Colonic mucosa (tissue), 4 donors: ENCODE measurements at regions of chr6 and their contacts with region 1.

Region 1: DNA sequence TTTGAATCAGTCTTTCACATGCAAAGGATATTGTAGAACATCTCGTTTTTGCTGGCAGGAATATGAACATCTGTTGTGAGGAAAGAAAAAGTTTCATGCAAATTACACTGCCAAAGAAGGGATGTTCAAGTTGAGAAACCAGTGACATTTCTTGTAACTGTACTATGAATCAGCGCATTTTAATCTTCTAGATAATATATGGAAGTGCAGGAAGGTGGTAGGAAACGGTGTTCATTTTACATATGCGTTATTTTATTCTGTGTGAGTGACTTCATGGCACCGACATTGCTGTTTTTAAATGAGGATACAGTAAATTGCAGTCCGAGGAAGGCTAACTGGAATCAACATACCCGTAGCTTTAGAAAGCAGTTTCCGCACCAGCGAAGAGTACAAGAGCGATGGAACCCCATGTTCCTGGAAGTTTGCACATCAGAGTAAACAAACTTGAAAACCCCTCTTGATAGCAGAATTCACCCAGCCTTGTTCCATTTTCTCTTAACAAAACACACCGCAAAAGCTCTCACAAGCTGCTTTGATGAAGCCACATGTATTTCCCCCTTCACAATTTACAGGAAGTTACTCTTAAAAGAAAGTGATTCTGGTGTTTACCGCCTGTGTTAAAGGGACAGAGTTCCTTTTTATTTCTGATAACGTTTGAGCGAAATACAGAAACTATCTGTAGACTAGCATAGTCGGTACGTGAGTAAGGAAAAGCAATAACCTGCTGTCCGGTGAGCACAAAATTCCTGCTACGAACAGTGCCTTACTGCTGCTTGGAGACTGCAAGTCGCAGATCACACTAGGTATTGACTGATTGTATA is 11.5 kb downstream of the PRDM1 start:
- DNase-seq: peak; percentile 51
- H3K4me3 ChIP-seq: peak overlapping the region; percentile 41
- H3K27ac ChIP-seq: peak overlapping the region; percentile 79
- H3K4me1 ChIP-seq: no peaks in the 10 kb centered on the region
- H3K27me3 ChIP-seq: no peaks in the 10 kb centered on the region
- CTCF ChIP-seq: no peak

Region 2: DNA sequence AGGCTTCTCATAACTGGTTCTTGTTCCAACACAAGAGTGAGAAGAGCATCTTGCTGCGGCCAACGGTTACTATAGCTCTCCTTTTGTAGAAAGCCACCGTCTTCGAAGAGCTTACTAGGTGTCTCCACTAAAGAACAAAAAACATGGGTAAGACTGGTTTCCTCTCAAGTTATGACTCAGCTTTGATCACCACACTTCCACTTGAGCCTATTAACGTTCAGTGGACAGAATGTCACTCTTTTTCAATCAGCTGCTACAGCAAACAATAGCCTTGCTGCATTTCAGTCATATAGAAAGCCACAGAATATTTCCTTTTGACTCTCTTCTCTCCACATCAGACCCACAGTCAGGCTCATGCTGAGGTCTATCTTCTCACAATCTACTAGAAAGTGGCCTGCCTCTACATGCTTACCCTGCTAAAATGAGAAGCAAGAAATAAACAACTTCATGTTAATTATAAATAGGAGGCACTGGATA is 451.2 kb before region 1 on chr6:
- intact Hi-C with region 1: no loop called
- DNase-seq: no peak
- H3K4me3 ChIP-seq: no peak overlapping the region
- H3K27ac ChIP-seq: no peak overlapping the region
- H3K4me1 ChIP-seq: no peaks in the 10 kb centered on the region
- H3K27me3 ChIP-seq: no peaks in the 10 kb centered on the region
- CTCF ChIP-seq: no peak

Region 3: DNA sequence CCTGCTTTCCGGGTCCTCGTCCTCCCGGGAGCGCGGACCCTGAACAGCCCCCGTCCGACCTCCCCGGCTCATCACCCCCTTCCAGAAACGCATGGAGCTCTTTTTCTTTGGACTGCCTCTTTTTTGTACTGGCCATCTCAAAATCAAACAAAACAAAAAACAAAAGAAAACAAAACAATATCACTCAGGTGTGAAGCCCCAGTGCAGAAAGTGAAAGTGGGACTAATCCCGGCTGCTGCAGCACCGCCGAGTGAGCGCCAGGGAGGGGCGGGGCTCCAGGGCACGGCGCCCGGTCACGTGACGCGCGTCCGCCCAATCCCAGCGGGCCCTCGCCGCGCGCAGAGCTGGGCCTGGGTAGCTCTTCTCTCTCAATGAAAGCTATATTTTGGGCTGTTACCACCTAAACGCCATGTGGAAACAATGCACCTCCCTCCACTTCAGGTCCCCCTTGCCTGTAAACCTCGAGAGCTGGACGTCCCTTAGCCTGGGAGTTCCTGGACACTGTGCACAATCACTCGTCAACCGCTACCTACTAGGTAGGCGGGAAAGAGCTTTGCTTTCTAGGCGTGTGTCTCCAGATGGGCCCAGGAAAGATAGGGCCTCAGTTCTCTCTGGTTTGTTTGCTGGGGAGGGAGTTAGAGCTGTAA is 105.2 kb before region 1 on chr6:
- intact Hi-C with region 1: loop called (anchors 10 kb)
- DNase-seq: peak; percentile 87
- H3K4me3 ChIP-seq: peak overlapping the region; percentile 63
- H3K27ac ChIP-seq: peak overlapping the region; percentile 48
- H3K4me1 ChIP-seq: no peaks in the 10 kb centered on the region
- H3K27me3 ChIP-seq: peaks cover 33% of the 10 kb centered on the region
- CTCF ChIP-seq: no peak

Region 4: GRCh38 chr6:106145741-106146227 is 48.2 kb after region 1 on chr6:
- intact Hi-C with region 1: no loop called
- DNase-seq: no peak
- H3K4me3 ChIP-seq: no peak overlapping the region
- H3K27ac ChIP-seq: no peak overlapping the region
- H3K4me1 ChIP-seq: no peaks in the 10 kb centered on the region
- H3K27me3 ChIP-seq: no peaks in the 10 kb centered on the region
- CTCF ChIP-seq: no peak

Region 5: GRCh38 chr6:106194949-106195921 is 97.6 kb after region 1 on chr6:
- intact Hi-C with region 1: loop called (anchors 10 kb)
- DNase-seq: no peak
- H3K4me3 ChIP-seq: no peak overlapping the region
- H3K27ac ChIP-seq: peak overlapping the region; percentile 4
- H3K4me1 ChIP-seq: no peaks in the 10 kb centered on the region
- H3K27me3 ChIP-seq: no peaks in the 10 kb centered on the region
- CTCF ChIP-seq: no peak

Region 6: GRCh38 chr6:106223300-106223930 is 125.8 kb after region 1 on chr6:
- intact Hi-C with region 1: loop called (anchors 10 kb)
- DNase-seq: peak; percentile 79
- H3K4me3 ChIP-seq: no peak overlapping the region
- H3K27ac ChIP-seq: no peak overlapping the region
- H3K4me1 ChIP-seq: no peaks in the 10 kb centered on the region
- H3K27me3 ChIP-seq: no peaks in the 10 kb centered on the region
- CTCF ChIP-seq: peak; percentile 56

Region 7: GRCh38 chr6:106300944-106301343 is 203.3 kb after region 1 on chr6:
- intact Hi-C with region 1: loop called (anchors 10 kb)
- DNase-seq: no peak
- H3K4me3 ChIP-seq: no peak overlapping the region
- H3K27ac ChIP-seq: no peak overlapping the region
- H3K4me1 ChIP-seq: peaks cover 5% of the 10 kb centered on the region
- H3K27me3 ChIP-seq: no peaks in the 10 kb centered on the region
- CTCF ChIP-seq: peak; percentile 19

Region 8: GRCh38 chr6:106377061-106377540 is 279.5 kb after region 1 on chr6:
- intact Hi-C with region 1: no loop called
- DNase-seq: no peak
- H3K4me3 ChIP-seq: no peak overlapping the region
- H3K27ac ChIP-seq: no peak overlapping the region
- H3K4me1 ChIP-seq: no peaks in the 10 kb centered on the region
- H3K27me3 ChIP-seq: no peaks in the 10 kb centered on the region
- CTCF ChIP-seq: no peak

Region 9: GRCh38 chr6:106787327-106788196 is 689.9 kb after region 1 on chr6:
- intact Hi-C with region 1: no loop called
- DNase-seq: no peak
- H3K4me3 ChIP-seq: no peak overlapping the region
- H3K27ac ChIP-seq: no peak overlapping the region
- H3K4me1 ChIP-seq: no peaks in the 10 kb centered on the region
- H3K27me3 ChIP-seq: no peaks in the 10 kb centered on the region
- CTCF ChIP-seq: no peak